Sigmoid colon (tissue), 7 donors: ENCODE measurements at regions of chr14 and their contacts with region 1.

Region 1: DNA sequence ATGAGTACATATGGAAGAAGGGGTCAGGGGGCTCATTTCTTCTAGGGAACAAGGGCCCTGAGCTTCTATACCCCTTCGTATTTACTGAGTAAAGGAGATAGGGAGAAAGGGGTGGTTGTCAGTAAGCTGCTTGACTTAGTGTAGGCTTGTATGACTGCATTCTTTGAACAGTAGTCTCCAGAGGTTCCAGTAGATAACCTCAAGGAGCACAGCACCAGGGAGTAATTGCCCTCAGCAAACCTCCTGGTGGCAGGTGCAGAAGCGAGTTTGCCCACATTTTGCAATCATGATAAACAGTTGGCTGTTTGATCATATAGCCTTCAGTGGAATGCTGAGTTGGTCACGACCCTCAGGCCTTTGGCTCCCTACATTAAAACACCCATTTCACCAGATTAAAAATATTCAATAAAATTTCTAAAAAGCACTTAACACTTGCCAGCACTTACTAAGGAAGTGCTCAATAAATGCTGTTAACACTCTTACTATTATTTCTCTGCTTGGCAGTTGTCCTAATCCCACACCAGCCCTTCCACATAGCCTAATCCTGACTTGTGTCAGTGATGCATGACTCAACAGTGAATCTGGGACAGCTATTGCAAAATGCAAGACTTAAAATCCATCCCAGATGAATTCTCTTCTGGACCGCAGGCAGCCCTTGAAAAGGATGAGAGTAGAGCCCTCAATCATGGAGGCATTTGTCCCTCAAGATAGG is 3.7 kb upstream of the DHRS4L2 start:
- DNase-seq: no peak
- H3K4me3 ChIP-seq: no peak overlapping the region
- H3K27ac ChIP-seq: peak overlapping the region in 1 of 4 donors; percentile 64
- H3K4me1 ChIP-seq: peaks cover 0 to 13% (median 4%) of the 10 kb centered on the region in 4 donors
- H3K27me3 ChIP-seq: no peaks in the 10 kb centered on the region
- CTCF ChIP-seq: no peak
- EP300 ChIP-seq: no peak
- POLR2A ChIP-seq: no peak

Region 2: DNA sequence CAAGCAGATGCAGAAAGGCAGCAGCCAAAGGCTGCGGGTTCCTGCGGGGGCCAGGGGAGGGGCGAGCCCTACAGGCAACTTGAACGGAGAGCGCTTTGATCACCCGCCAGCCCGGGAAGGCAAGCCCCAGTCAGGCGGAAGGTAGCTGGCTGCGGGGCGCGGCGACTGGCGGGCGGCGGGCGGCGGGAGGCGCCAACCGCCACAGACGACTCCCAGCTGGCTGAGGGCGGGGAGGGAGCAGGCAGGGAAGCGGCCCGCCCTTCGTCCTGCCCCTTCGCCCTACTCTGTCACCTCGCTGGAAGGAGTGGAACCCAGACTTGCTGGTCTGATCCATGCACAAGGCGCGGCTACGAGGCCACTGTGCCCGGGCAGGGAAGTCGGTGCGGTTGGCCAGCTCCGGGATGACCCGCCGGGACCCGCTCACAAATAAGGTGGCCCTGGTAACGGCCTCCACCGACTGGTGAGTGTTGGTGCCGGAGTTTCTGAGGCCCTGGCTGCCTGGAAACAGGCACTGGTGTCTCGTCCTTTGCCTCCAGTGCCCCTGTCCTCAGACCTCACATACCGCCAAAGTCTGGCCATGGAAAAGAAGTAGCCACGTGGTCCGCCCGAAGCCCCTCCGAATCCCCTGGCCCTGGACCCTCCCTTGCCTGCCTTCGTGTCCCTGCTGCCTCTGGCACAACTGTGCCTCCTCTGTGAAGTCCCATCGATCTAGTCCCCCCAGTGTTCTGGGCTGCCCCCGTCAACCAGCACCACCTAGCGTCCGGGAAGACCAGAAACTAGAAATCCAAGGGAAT is 51.3 kb after region 1 on chr14:
- intact Hi-C with region 1: loop called (anchors 5 kb)
- DNase-seq: peak; percentile 87
- H3K4me3 ChIP-seq: peak overlapping the region; percentile 42 to 59 (median 54)
- H3K27ac ChIP-seq: peak overlapping the region; percentile 84 to 93 (median 88)
- H3K4me1 ChIP-seq: peaks cover 0 to 6% (median 0%) of the 10 kb centered on the region in 4 donors
- H3K27me3 ChIP-seq: no peaks in the 10 kb centered on the region
- CTCF ChIP-seq: peak; percentile 57 to 74 (median 65)
- EP300 ChIP-seq: no peak
- POLR2A ChIP-seq: peak in 1 of 2 donors; percentile 34